ENCODE measurements at regions of chr2 and their contacts with region 1.

Region 1: GRCh38 chr2:235595422-235596010 is 101.7 kb downstream of the AGAP1 start:
- DNase-seq: no peak
- H3K4me3 ChIP-seq: no peak overlapping the region
- H3K27ac ChIP-seq: peak overlapping the region in 1 of 4 donors; percentile 11
- H3K4me1 ChIP-seq: peaks cover 3 to 39% (median 32%) of the 10 kb centered on the region in 4 donors
- H3K27me3 ChIP-seq: no peaks in the 10 kb centered on the region
- CTCF ChIP-seq: peak; percentile 89 to 94 (median 90)
- EP300 ChIP-seq: no peak
- POLR2A ChIP-seq: no peak

Region 2: GRCh38 chr2:235135990-235136561 is 459.4 kb before region 1 on chr2:
- intact Hi-C with region 1: loop called (anchors 1 kb)
- DNase-seq: no peak
- H3K4me3 ChIP-seq: no peak overlapping the region
- H3K27ac ChIP-seq: no peak overlapping the region
- H3K4me1 ChIP-seq: peaks cover 0 to 5% (median 0%) of the 10 kb centered on the region in 4 donors
- H3K27me3 ChIP-seq: peaks cover 0 to 9% (median 0%) of the 10 kb centered on the region in 4 donors
- CTCF ChIP-seq: peak; percentile 68 to 79 (median 72)
- EP300 ChIP-seq: no peak
- POLR2A ChIP-seq: no peak

Region 3: GRCh38 chr2:235433860-235434259 is 161.7 kb before region 1 on chr2:
- intact Hi-C with region 1: loop called (anchors 5 kb)
- DNase-seq: no peak
- H3K4me3 ChIP-seq: no peak overlapping the region
- H3K27ac ChIP-seq: peak overlapping the region in 2 of 4 donors; percentile 38 to 74
- H3K4me1 ChIP-seq: peaks cover 11 to 20% (median 17%) of the 10 kb centered on the region in 4 donors
- H3K27me3 ChIP-seq: no peaks in the 10 kb centered on the region
- CTCF ChIP-seq: peak; percentile 15 to 22 (median 20)
- EP300 ChIP-seq: no peak
- POLR2A ChIP-seq: no peak

Region 4: DNA sequence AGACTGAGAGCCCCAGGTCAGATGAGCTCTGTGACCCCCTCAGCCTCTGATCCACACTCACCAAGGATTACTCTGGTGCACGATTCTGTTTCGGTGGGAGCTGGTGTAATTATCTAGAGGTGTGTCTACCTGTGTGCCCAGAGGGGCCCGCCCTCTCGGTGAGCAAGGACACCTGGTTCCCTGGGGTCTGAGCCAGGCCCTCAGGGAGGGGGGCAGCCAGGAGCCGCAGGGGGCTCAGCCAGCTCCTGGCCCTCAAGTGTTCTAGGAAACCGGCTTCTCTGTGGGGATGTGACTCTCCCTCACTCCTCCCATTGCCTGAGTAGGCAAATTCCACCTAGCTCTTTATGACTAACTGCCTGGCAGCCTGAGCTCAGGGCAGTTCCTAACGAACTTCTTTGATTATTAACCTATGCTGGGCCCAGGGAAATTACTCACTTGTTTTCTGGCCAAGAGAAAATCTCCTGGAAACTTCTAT is 84.3 kb before region 1 on chr2:
- intact Hi-C with region 1: no loop called
- DNase-seq: no peak
- H3K4me3 ChIP-seq: no peak overlapping the region
- H3K27ac ChIP-seq: no peak overlapping the region
- H3K4me1 ChIP-seq: peaks cover 5 to 36% (median 29%) of the 10 kb centered on the region in 4 donors
- H3K27me3 ChIP-seq: no peaks in the 10 kb centered on the region
- CTCF ChIP-seq: no peak
- EP300 ChIP-seq: no peak
- POLR2A ChIP-seq: no peak

Region 5: DNA sequence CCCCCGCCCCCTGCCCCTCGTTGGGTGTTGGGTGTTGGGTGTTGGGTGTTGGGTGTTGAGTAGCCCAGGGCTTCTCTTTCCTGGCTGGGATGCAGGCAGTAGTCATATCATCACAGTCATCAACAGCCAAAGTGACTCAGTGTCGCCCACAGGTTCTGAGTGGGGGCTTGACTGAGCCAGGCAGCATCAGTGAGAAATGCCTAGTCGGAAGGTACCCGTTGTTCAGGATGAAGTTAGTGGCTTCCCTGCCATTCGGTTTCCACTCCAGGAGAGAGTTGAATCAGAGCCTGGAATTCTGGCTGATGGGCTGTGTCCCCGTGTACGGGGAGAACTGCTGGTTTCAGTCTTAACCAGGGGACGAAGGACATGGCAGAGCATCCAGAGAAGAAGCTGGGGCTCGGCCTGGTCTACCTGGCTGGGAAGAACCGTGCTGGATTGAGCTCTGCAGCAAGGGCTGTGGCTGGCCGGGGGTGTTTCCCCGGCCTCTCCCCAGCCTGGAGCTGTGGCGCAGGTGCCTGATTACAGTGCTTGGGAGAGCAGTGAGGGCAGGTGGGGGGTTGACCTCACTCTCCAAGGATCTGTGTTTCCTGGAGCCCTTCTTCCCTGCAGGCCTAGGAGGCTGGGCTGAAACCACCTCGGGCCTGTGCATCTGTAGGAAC is 52.3 kb before region 1 on chr2:
- intact Hi-C with region 1: no loop called
- DNase-seq: no peak
- H3K4me3 ChIP-seq: no peak overlapping the region
- H3K27ac ChIP-seq: no peak overlapping the region
- H3K4me1 ChIP-seq: peaks cover 0 to 23% (median 17%) of the 10 kb centered on the region in 4 donors
- H3K27me3 ChIP-seq: no peaks in the 10 kb centered on the region
- CTCF ChIP-seq: no peak
- EP300 ChIP-seq: no peak
- POLR2A ChIP-seq: no peak

Region 6: GRCh38 chr2:235669983-235670962 is 74.8 kb after region 1 on chr2:
- intact Hi-C with region 1: loop called (anchors 1 kb)
- DNase-seq: no peak
- H3K4me3 ChIP-seq: peak overlapping the region; percentile 67 to 83 (median 78)
- H3K27ac ChIP-seq: peak overlapping the region; percentile 81 to 86 (median 82)
- H3K4me1 ChIP-seq: peaks cover 22 to 74% (median 58%) of the 10 kb centered on the region in 4 donors
- H3K27me3 ChIP-seq: peaks cover 0 to 5% (median 0%) of the 10 kb centered on the region in 4 donors
- CTCF ChIP-seq: peak; percentile 73 to 88 (median 77)
- EP300 ChIP-seq: no peak
- POLR2A ChIP-seq: no peak

Region 7: DNA sequence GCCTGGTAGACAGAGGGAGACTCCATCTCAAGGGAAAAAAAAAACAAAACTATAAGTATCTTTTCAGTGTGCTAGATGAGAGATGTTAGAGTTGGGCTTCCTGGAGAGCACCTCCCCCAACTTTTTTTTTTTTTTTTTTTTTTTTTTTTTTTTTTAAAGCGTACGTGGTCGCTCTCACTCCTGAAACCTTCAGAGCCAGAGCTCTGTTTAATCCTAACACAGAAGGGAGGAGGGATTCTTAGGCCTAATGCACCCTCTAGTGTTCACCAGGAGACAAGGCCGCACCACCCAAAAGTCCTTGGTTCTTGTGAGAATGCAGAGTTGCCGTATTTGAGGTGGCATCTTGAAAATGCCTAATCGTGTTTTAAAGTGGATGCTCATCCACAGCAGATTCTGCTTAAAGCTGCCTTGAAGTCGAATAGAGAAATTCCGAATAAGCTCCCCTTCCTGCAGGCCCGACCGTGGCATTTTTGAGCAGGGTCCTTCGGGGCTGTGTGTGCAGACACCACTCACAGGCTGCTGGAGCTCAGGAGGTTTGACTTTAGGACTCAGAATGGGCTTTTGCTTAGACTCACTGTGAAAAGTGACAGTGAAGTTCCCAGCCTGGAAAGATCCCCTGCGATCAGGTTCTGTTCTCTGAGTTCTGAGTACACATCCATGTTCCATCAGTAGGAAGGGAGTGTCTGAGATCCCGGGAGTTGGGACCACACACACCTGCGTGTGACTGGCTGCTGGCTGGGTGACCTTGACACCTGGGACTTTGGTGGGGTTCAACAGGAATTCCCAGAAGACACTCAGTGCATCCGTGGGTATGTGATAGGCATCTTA is 151.0 kb after region 1 on chr2:
- intact Hi-C with region 1: loop called (anchors 2 kb)
- DNase-seq: no peak
- H3K4me3 ChIP-seq: no peak overlapping the region
- H3K27ac ChIP-seq: peak overlapping the region; percentile 60 to 76 (median 68)
- H3K4me1 ChIP-seq: peaks cover 14 to 52% (median 46%) of the 10 kb centered on the region in 4 donors
- H3K27me3 ChIP-seq: no peaks in the 10 kb centered on the region
- CTCF ChIP-seq: peak; percentile 82 to 87 (median 82)
- EP300 ChIP-seq: no peak
- POLR2A ChIP-seq: no peak